AG04449 (cell line): ENCODE measurements at regions of chr16 and their contacts with region 1.

Region 1: DNA sequence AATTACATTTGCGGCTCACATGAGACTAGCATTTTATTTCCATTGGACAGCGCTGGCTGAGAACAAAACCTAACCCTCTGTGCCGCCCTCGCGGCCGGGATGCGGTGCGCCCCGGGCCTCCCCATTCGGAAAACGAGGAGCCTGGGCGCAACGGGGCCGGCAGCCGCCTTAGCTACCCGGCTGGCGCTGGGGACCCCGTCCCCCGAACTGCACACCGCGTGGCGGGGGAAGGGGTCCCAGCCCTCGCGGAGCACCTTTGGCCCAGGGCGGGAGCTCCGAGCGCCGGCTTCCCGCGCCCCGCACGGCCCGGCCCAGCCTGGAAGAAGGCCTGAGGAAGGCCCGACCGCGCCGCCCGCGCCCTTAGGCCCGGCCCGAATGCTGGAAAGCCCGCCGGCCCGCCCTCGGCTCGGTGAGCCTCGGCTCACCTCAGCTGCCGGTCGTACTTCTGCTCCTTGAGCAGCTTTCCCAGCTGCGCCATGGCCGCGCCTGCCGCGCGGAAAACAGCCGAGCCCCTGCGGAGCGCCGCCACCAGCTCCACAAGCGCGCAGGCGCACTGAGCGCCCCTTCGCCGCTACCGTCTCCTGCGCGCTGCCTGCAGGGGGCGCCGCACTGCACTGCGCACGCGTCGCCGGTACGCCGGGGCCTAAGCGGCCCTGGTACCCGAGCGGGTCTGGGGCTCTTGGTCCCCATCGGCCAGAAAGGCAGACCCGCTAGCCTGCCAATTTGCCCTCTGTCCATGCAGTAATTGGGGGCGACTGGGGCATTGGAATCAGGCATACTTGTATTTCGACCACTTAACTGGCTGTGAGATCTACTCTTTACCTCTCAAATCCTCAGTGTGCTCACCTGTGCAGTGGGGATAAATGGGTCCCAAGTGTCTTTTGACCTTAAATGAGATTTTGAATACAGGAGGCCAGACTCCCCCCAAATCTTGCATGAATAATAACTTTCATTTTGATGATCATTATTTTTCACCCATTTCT is at the start of gene NAE1:
- DNase-seq: no peak
- H3K4me3 ChIP-seq: peak within 1 kb of the TSS; percentile 72
- CTCF ChIP-seq: peak; percentile 96

Region 2: DNA sequence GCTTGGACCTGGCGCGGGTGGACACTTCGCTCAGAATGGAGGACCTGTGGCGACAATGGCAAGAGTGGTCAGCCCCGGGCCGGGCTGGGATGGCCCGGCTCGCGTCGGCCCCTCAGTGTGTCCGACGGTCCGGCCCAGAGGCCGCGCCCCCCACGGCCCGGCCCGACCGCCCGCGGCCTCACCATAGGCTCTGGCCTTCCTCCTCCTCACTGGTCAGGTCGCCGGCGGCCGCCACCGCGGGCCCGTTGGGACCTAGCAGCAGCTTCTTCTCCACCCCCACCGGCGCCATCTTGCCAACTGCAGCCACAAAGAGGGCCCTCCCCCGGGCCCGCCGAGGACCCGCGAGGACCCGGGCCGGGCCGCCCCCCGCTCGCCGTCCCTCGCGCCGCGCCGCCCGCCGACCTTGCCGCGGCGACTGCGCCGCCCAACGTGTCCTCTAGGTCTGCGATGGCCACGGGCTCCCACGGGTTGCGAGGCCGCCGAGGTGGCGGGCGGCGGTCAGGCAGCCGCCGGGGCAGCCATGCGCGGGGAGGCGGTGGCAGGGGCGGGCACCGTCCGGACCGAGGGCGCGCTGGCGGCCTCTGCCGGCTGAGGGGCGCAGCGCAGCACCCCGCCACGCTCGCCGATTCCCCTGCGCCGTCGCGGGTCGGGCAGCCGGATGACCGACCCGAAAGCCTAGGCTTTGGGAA is 79.3 kb before region 1 on chr16 and contains the start of gene DYNC1LI2:
- CTCF ChIA-PET with region 1: interaction called, 26 read pairs
- POLR2A ChIA-PET with region 1: no interaction called
- DNase-seq: no peak
- H3K4me3 ChIP-seq: peak within 1 kb of the TSS; percentile 93
- CTCF ChIP-seq: peak; percentile 74

Region 3: GRCh38 chr16:66774981-66775380 is 55.7 kb before region 1 on chr16:
- CTCF ChIA-PET with region 1: interaction called, 23 read pairs
- POLR2A ChIA-PET with region 1: no interaction called
- DNase-seq: no peak
- H3K4me3 ChIP-seq: no peak overlapping the region
- CTCF ChIP-seq: no peak

Region 4: GRCh38 chr16:66801320-66802105 is 29.2 kb before region 1 on chr16 and contains the start of gene TERB1:
- CTCF ChIA-PET with region 1: interaction called, 30 read pairs
- POLR2A ChIA-PET with region 1: no interaction called
- DNase-seq: no peak
- H3K4me3 ChIP-seq: no peak within 1 kb of the TSS
- CTCF ChIP-seq: no peak

Region 5: GRCh38 chr16:66844342-66845079 is 13.8 kb after region 1 on chr16 and contains the start of gene CA7:
- CTCF ChIA-PET with region 1: interaction called, 205 read pairs
- POLR2A ChIA-PET with region 1: no interaction called
- DNase-seq: no peak
- H3K4me3 ChIP-seq: peak within 1 kb of the TSS; percentile 36
- CTCF ChIP-seq: no peak

Region 6: DNA sequence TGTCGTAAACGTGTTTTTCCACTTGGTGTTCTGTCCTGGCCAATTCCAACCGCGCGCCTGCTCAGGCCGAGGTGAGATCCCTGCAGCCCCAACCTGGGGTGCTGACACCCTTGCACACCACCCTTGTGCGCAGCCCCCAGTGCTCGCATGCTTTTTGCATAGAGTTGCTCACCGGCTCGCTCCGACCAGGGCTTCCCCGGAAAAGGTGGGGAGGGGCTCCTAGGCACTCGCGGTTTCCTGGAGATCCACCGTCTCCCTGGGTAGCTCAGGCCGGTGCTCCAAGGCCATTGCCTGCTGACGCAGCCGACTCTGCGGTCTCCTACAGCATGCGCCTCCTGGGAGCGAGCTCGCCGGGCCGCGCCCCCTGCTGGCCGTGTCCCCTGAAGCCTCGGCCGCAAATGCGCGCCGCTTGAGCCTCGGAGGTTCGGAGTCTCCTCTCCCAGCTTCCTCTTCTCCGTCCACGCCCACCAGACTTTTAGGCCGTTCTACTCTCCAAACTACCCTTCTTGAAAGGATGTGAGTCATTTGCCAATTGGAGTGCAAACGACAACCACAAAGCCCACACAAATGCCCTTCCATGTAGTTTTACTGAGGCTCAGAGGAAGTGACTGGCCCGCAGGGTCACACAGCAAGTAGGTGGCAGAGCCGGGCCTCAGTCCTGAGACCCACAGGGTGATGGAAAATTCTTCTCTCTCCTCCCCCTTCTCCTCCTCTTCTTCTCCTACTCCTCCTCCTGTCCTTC is 42.4 kb after region 1 on chr16:
- CTCF ChIA-PET with region 1: interaction called, 203 read pairs
- POLR2A ChIA-PET with region 1: interaction called, 10 read pairs
- DNase-seq: peak; percentile 95
- H3K4me3 ChIP-seq: peak overlapping the region; percentile 51
- CTCF ChIP-seq: peak; percentile 99